CD14-positive monocyte (primary cell): ENCODE measurements at regions of chr14 and their contacts with region 1.

Region 1: GRCh38 chr14:23379366-23380196 is 2.7 kb downstream of the CMTM5 start:
- DNase-seq: peak; percentile 27 to 41 (median 29)
- H3K4me3 ChIP-seq: no peak overlapping the region
- H3K4me3 Mint-ChIP-seq: no peak overlapping the region
- H3K27ac ChIP-seq: no peak overlapping the region
- H3K27ac Mint-ChIP-seq: no peak overlapping the region
- H3K4me1 ChIP-seq: no peaks in the 10 kb centered on the region
- H3K4me1 Mint-ChIP-seq: no peaks in the 10 kb centered on the region
- H3K27me3 ChIP-seq: no peaks in the 10 kb centered on the region
- H3K27me3 Mint-ChIP-seq: peaks cover 3 to 13% (median 10%) of the 10 kb centered on the region in 3 donors
- CTCF ChIP-seq: peak; percentile 95

Region 2: DNA sequence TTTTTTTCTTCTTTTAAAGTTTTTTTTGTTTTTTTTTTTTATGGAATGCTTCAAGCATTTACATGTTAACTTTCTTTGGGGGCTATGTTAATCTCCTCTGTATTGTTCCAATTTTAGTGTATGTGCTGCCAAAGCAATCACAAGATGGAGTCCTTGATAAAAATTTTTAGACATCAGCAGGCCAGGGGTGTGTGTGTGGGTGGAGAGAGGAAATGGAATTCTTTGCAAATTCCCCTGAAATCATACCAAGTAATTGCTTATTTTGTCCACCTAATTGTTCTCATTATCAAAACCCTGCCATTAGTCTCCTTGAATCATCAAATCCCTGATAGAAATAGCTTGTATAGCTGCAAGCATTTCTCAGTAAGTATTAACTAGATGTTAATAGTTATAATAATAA is 120.2 kb before region 1 on chr14:
- intact Hi-C with region 1: loop called in 1 of 2 experiments (anchors 2 kb)
- DNase-seq: no peak
- H3K4me3 ChIP-seq: no peak overlapping the region
- H3K4me3 Mint-ChIP-seq: no peak overlapping the region
- H3K27ac ChIP-seq: no peak overlapping the region
- H3K27ac Mint-ChIP-seq: peak overlapping the region in 1 of 7 donors; percentile 68
- H3K4me1 ChIP-seq: no peaks in the 10 kb centered on the region
- H3K4me1 Mint-ChIP-seq: peaks cover 2% of the 10 kb centered on the region
- H3K27me3 ChIP-seq: peaks cover 0 to 8% of the 10 kb centered on the region in 2 donors
- H3K27me3 Mint-ChIP-seq: peaks cover 8 to 19% (median 11%) of the 10 kb centered on the region in 3 donors
- CTCF ChIP-seq: no peak

Region 3: GRCh38 chr14:23269193-23269592 is 110.4 kb before region 1 on chr14:
- intact Hi-C with region 1: loop called (anchors 1 to 2 kb)
- DNase-seq: no peak
- H3K4me3 ChIP-seq: no peak overlapping the region
- H3K4me3 Mint-ChIP-seq: no peak overlapping the region
- H3K27ac ChIP-seq: no peak overlapping the region
- H3K27ac Mint-ChIP-seq: no peak overlapping the region
- H3K4me1 ChIP-seq: no peaks in the 10 kb centered on the region
- H3K4me1 Mint-ChIP-seq: no peaks in the 10 kb centered on the region
- H3K27me3 ChIP-seq: peaks cover 0 to 2% of the 10 kb centered on the region in 2 donors
- H3K27me3 Mint-ChIP-seq: peaks cover 0 to 8% (median 6%) of the 10 kb centered on the region in 3 donors
- CTCF ChIP-seq: no peak

Region 4: GRCh38 chr14:23415821-23416778 is 36.5 kb after region 1 on chr14:
- intact Hi-C with region 1: no loop called
- DNase-seq: no peak
- H3K4me3 ChIP-seq: no peak overlapping the region
- H3K4me3 Mint-ChIP-seq: no peak overlapping the region
- H3K27ac ChIP-seq: no peak overlapping the region
- H3K27ac Mint-ChIP-seq: no peak overlapping the region
- H3K4me1 ChIP-seq: no peaks in the 10 kb centered on the region
- H3K4me1 Mint-ChIP-seq: no peaks in the 10 kb centered on the region
- H3K27me3 ChIP-seq: no peaks in the 10 kb centered on the region
- H3K27me3 Mint-ChIP-seq: peaks cover 6 to 11% (median 9%) of the 10 kb centered on the region in 3 donors
- CTCF ChIP-seq: no peak